Activated T-helper 2 cell treated with anti-CD3 and anti-CD28 coated beads, Interferon-gamma antibody, Interleukin-2, Interleukin-4, amounts not matched to agents 10 μg/mL and 5 μg/mL and 100 μg/mL, durations not matched to agents 14 hours and 24 hours and 36 hours (primary cell): ENCODE measurements at regions of chr6 and their contacts with region 1.

Region 1: DNA sequence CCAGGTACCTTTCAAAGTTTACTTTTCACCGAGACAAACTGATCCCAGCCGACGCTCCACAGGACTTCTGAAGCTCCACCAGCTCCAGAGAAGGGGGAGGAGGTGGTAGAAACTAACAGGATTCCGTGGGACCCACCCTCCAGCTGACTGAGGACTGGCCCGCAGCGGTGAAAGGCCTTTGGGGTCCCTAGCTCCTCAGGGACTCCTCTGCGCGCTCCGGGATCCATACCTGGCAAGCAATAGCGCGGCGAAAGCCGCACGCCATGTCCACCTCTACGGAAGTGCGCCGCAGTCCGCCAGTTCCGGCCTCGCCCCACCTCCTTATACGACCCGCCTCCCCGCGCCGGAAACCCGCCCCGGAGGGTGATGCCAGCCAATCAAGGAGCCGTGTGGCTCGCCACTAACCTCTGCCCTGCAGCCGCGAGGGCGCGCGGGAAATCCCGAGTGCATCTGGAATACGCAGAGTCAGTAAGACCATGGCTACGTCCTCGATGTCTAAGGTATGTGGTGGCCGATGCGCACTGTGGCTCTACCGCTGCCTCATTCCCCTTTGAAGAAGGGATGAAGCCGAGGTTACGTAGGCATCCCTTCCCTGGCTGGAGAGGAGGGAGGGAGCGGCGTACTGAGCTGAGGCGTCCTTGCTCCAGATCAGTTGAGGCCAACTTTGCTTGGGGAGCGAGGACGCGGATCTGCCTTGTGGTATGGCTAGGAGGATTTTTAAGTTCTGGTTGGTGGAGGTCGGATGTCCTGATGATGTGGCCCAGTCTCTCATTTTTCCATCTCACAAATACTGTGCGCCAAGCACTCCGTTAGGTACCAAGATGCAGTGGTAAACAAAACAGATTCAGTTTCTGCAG is at the starts of genes ORC3 and RARS2:
- DNase-seq: peak; percentile 94
- H3K4me3 Mint-ChIP-seq: peak within 1 kb of the TSS; percentile 95
- H3K27ac Mint-ChIP-seq: peak within 1 kb of the TSS; percentile 89
- H3K4me1 Mint-ChIP-seq: peaks cover 39% of the 10 kb centered on the region
- H3K27me3 Mint-ChIP-seq: no peaks in the 10 kb centered on the region
- total RNA-seq, gene ORC3: 31.2 and 31.9 TPM in 2 replicates
- total RNA-seq, gene RARS2: 23.3 and 23.5 TPM in 2 replicates

Region 2: DNA sequence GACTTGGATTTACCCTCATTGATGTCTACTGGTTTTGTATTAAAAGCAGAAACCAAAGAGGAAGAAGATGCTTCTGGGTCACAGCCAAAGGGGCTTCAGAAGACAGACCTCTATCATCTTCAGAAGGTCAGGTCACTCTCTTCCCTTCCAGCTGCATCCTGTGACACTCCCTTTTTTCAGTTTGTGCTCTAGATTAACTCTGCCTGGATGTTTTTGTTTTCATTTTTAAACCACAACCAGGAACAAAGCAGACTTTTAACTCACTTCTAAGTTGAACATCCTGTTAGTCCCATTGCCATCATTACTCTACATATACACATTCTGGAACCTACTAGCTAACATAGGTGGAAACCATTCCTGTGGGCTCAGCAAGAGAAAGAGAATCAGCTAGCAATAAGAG is 66.9 kb after region 1 on chr6:
- intact Hi-C with region 1: loop called (anchors 5 kb)
- DNase-seq: no peak
- H3K4me3 Mint-ChIP-seq: no peak overlapping the region
- H3K27ac Mint-ChIP-seq: peak overlapping the region; percentile 43
- H3K4me1 Mint-ChIP-seq: peaks cover 37% of the 10 kb centered on the region
- H3K27me3 Mint-ChIP-seq: no peaks in the 10 kb centered on the region